ENCODE measurements at regions of chr1 and their contacts with region 1.

Region 1: DNA sequence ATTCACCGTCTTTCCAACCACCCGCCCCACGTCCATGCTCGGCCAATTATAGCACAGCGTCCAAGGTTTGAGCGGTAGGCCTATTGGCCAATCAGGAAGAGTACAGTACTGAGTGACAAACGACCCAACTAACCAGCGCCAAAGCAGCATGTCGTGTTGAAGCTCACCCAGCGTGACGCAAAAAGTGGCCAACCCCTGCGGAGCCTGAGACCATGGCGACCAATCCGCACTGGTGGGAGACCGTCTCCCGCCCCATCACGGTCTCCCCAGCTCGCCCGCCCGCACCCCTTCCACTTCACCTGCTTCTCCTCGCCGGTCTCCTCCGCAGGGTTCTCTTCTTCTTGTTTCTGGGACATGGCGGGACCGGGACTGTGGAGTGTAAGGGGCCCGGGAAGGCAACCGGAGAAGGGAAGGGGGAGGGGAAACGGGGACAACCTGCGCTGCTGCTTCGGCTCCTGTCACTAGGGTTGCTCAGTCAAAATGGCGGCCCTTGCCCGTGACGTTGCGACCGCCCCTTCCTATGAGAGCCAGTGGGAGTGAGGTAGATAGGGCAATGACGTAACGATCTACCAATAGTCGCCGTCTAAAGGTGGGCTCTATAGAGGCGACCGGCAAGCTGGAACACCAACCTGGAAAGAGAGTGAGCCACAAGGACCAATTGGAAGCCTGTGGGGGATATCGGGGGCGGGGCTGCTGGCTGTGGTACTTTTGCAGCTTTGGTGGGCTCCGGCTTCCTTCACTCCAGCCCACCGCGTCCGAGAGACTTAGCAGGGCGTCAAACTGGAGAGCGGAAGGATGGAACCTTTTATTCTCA is at the start of gene ENSA:
- DNase-seq: peak; percentile 100
- H3K4me3 ChIP-seq: peak within 1 kb of the TSS; percentile 59 to 71 (median 64)
- H3K27ac ChIP-seq: peak within 1 kb of the TSS; percentile 93 to 95 (median 94)
- H3K4me1 ChIP-seq: peaks cover 0 to 26% (median 24%) of the 10 kb centered on the region in 4 donors
- H3K27me3 ChIP-seq: no peaks in the 10 kb centered on the region
- CTCF ChIP-seq: no peak
- EP300 ChIP-seq: no peak
- POLR2A ChIP-seq: peak; percentile 94 to 96
- total RNA-seq, gene ENSA: 114 to 150 (median 129) TPM

Region 2: DNA sequence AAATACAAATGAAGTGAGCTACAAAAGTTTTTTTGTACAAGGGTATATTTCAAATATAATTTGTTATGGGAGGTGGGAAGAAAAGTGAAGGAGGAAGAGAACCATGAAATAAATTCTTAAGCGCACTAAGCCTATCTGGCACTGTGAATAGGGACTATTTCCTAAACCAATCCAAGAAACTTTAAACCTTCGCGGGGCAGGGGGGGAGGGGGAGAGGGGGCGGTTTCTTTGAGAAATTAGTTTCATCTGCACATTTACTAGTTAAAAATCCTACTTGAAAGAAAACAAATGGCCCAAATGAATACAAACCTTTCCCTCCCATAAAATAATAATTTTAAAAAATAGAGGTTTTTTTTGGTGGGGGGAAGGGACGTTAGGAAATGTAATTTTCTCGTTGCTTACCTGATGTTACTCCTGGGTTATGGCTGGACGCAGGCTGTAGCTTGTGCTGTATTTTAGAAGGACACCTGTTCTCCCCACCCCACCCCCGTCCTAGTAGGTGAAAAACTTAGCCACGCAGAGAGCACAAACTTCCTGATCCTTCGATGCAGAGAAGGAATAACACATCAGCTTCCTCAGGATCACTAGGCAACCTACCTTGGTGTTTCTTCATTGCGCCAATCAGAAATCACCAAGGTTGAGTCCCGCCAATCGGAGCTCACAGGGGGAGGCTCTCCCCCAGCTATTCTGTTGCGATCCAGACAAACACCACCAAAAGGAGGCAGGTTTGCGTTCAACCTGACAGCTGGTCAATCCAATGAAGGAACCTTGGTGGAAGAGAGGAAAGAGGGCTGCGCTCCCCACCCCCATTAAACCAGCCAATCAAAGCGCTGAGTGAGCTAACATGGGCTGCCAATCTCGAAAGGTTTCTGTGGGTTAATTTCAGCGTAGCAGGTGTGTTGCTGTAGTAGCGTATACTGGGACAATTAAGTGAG is 67.5 kb after region 1 on chr1 and contains the start of gene GOLPH3L:
- intact Hi-C with region 1: loop called (anchors 5 kb)
- DNase-seq: peak; percentile 98
- H3K4me3 ChIP-seq: peak within 1 kb of the TSS; percentile 60 to 73 (median 64)
- H3K27ac ChIP-seq: peak within 1 kb of the TSS; percentile 79 to 80 (median 79)
- H3K4me1 ChIP-seq: peaks cover 0 to 24% (median 6%) of the 10 kb centered on the region in 4 donors
- H3K27me3 ChIP-seq: no peaks in the 10 kb centered on the region
- CTCF ChIP-seq: no peak
- EP300 ChIP-seq: no peak
- POLR2A ChIP-seq: peak in 1 of 2 donors; percentile 58
- total RNA-seq, gene GOLPH3L: 18.1 to 27.2 (median 20.7) TPM

Region 3: DNA sequence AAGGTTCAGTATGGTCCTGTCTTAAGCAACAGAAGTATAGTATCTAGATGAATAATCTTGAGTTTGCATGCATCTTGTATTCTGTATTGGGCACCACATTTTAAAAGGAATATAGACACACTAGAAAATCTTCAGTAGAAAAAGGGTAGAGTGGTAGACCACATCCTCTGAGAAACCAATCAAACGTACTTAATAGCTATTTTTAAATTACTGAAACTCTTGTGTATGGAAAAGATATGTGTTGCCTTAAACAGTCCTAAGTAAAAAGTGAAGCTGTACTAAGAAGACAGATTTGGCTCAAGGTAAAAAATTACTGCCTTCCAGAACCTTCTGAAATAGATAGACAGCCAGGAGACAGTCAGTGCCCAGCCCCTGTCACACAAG is 260.7 kb after region 1 on chr1:
- intact Hi-C with region 1: no loop called
- DNase-seq: no peak
- H3K4me3 ChIP-seq: no peak overlapping the region
- H3K27ac ChIP-seq: no peak overlapping the region
- H3K4me1 ChIP-seq: no peaks in the 10 kb centered on the region
- H3K27me3 ChIP-seq: no peaks in the 10 kb centered on the region
- CTCF ChIP-seq: no peak
- EP300 ChIP-seq: no peak
- POLR2A ChIP-seq: no peak